ENCODE measurements at regions of chr1 and their contacts with region 1.

Region 1: DNA sequence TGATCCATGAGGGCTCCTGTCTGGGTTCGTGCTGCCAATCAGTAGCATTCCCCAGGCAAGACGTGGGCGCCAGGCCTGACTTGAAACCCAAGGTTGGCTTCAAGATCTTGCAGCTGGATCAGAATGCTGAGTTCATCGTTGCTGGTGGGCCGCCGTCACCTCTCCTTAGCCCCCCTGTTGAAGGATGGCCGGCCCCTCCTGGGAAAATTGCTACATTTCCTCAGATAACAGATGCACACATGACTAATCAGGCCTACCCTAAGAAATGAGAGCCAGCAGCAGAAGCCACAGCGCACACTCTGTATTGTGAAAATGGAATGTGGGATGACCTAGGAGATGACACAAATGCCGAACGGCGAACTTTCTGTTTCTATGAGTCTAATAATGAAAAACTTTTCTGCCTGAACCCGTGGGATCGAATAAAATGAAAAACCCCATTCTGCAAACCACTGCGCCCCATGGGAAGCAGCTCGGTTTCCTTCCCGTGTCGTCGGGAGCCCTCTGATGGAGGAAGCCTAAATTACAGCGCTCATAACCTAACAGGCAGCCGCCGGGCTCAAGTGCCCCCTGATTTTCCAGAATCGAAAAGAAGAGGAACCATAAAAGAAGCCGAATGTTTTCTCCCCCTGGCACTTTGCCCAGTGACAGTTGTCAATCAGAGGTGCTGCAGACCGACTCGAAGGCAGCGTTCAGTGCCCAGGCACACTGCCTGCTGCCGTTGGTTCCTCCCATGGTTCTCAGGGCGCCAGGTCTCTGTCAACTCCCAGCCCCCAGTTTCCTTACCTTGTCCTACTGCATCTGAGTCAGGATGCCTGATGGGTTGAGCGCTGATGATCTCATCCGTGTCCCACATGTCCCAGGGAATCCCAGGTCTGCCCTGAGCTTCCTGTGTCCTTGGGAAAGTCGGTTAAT is 38.2 kb upstream of the H6PD start:
- DNase-seq: peak in 3 of 4 donors; percentile 77 to 83 (median 78)
- ATAC-seq: peak; percentile 80
- H3K4me3 ChIP-seq: no peak overlapping the region
- H3K27ac ChIP-seq: peak overlapping the region; percentile 8 to 42
- H3K4me1 ChIP-seq: peaks cover 0 to 39% of the 10 kb centered on the region in 2 donors
- H3K27me3 ChIP-seq: peaks cover 34 to 48% of the 10 kb centered on the region in 2 donors
- CTCF ChIP-seq: peak; percentile 72 to 80

Region 2: GRCh38 chr1:9110669-9111356 is 85.6 kb before region 1 on chr1:
- intact Hi-C with region 1: loop called in 1 of 2 experiments (anchors 10 kb)
- DNase-seq: peak; percentile 79 to 97 (median 90)
- ATAC-seq: peak; percentile 95
- H3K4me3 ChIP-seq: no peak overlapping the region
- H3K27ac ChIP-seq: no peak overlapping the region
- H3K4me1 ChIP-seq: peaks cover 0 to 15% of the 10 kb centered on the region in 2 donors
- H3K27me3 ChIP-seq: no peaks in the 10 kb centered on the region
- CTCF ChIP-seq: peak; percentile 88 to 95

Region 3: DNA sequence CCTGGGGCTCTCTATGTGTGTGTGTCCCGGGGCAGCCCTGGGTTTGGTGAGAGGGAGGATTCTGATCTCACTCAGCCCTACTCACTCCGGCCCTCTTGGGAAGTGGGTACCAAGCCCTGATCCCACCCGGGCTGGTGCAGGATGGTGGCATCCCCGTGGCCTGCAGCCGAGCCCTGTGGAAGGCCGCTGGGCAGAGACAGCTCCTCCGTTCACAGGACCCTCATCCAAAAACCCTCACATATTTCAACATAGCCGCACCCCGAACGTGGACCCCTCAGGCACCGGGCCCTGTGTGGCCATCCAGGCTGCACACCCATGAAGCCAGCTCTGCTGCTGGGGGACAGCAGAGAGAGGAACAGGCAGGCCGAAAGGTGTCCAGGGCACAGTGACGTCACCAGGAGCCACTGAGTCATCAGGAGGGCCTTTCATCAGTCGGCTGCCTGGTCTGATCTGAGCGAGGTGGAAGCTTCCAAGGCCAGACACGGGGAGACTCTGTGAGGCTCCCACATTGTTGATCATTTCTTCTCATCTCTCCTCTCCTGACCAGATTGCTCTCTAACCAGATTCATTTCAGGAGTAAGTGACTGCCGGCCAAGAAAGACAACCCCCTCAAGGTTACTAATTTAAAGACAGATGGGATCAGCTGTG is 51.2 kb before region 1 on chr1:
- intact Hi-C with region 1: loop called in 1 of 2 experiments (anchors 10 kb)
- DNase-seq: peak in 2 of 4 donors; percentile 34 to 66
- ATAC-seq: no peak
- H3K4me3 ChIP-seq: no peak overlapping the region
- H3K27ac ChIP-seq: no peak overlapping the region
- H3K4me1 ChIP-seq: peaks cover 3 to 31% of the 10 kb centered on the region in 2 donors
- H3K27me3 ChIP-seq: no peaks in the 10 kb centered on the region
- CTCF ChIP-seq: no peak

Region 4: DNA sequence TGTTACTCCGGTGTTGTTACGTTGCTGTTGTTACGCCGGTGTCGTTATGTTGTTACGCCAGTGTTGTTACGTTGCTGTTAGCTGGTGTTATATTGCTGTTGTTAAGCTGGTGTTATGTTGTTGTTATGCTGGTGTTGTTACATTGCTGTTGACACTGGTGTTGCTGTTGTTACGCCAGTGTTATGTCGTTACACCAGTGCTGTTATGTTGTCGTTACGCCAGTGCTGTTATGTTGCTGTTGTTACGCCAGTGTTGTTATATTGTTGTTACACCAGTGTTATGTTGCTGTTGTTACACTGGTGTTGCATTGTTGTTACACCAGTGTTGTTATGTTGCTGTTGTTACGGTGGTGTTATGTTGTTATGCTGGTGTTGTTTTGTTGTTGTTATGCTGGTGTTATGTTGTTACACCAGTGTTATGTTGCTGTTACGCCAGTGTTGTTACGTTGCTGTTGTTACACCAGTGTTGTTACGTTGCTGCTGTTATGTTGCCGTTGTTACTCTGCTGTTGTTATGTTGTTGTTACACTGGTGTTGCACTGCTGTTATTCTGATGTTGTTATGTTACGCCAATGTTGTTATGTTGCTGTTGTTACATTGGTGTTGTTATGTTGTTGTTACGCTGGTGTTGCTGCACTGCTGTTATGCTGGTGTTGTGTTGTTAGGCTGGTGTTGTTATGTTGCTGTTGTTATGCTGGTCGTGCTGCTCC is 63.8 kb after region 1 on chr1:
- intact Hi-C with region 1: no loop called
- DNase-seq: no peak
- ATAC-seq: no peak
- H3K4me3 ChIP-seq: no peak overlapping the region
- H3K27ac ChIP-seq: no peak overlapping the region
- H3K4me1 ChIP-seq: peaks cover 0 to 4% of the 10 kb centered on the region in 2 donors
- H3K27me3 ChIP-seq: no peaks in the 10 kb centered on the region
- CTCF ChIP-seq: no peak

Measured in left lung (tissue), 14 donors.